GM12878 (cell line): ENCODE measurements at regions of chrX and their contacts with region 1.

Region 1: GRCh38 chrX:120463241-120463640 is 5.9 kb downstream of the LAMP2 start:
- DNase-seq: no peak
- ATAC-seq: no peak
- H3K4me3 ChIP-seq: no peak overlapping the region
- H3K27ac ChIP-seq: no peak overlapping the region
- H3K4me1 ChIP-seq: no peaks in the 10 kb centered on the region
- H3K27me3 ChIP-seq: no peaks in the 10 kb centered on the region
- CTCF ChIP-seq: no peak
- EP300 ChIP-seq: no peak
- POLR2A ChIP-seq: no peak
- RAD21 ChIP-seq: no peak

Region 2: DNA sequence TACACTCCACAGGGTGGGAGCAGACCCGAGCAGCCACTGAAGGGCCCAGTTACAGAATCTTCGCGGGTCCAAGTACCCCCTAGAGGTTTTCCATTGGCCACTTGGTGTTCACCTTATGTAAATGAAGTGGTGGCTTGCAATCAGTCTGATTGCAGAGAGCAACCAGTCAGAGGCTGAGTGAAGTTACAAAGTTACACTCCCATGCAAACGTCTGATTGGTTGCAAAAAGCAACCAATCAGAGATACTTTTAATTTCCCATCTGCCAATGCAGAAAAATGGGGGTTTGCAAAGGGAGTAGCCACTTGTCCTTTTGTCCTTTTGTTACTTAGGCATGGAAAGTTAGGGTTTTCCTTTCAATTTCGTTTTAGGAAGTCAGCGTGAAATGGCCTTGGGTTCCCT is 492.7 kb before region 1 on chrX:
- CTCF ChIA-PET with region 1: no interaction called
- POLR2A ChIA-PET with region 1: no interaction called
- RAD21 ChIA-PET with region 1: no interaction called
- SMC1A ChIA-PET with region 1: no interaction called
- in situ Hi-C with region 1: no loop called
- intact Hi-C with region 1: no loop called
- DNase-seq: no peak
- ATAC-seq: no peak
- H3K4me3 ChIP-seq: no peak overlapping the region
- H3K27ac ChIP-seq: no peak overlapping the region
- H3K4me1 ChIP-seq: no peaks in the 10 kb centered on the region
- H3K27me3 ChIP-seq: no peaks in the 10 kb centered on the region
- CTCF ChIP-seq: no peak
- EP300 ChIP-seq: no peak
- POLR2A ChIP-seq: no peak
- RAD21 ChIP-seq: no peak

Region 3: GRCh38 chrX:120452131-120452530 is 11.1 kb before region 1 on chrX:
- CTCF ChIA-PET with region 1: interaction called, 16 read pairs
- POLR2A ChIA-PET with region 1: interaction called, 7 read pairs
- RAD21 ChIA-PET with region 1: interaction called, 4 read pairs
- SMC1A ChIA-PET with region 1: interaction called, 16 read pairs
- in situ Hi-C with region 1: no loop called
- intact Hi-C with region 1: no loop called
- DNase-seq: no peak
- ATAC-seq: 0 out of 3 replicates have a peak, but pooled peaks have one; percentile 22
- H3K4me3 ChIP-seq: no peak overlapping the region
- H3K27ac ChIP-seq: no peak overlapping the region
- H3K4me1 ChIP-seq: peaks cover 3% of the 10 kb centered on the region
- H3K27me3 ChIP-seq: no peaks in the 10 kb centered on the region
- CTCF ChIP-seq: 0 out of 6 replicates have a peak, but pooled peaks of 2 of the 3 experiments have one; percentile 8 to 19
- EP300 ChIP-seq: no peak
- POLR2A ChIP-seq: no peak
- RAD21 ChIP-seq: peak; percentile 43

Region 4: DNA sequence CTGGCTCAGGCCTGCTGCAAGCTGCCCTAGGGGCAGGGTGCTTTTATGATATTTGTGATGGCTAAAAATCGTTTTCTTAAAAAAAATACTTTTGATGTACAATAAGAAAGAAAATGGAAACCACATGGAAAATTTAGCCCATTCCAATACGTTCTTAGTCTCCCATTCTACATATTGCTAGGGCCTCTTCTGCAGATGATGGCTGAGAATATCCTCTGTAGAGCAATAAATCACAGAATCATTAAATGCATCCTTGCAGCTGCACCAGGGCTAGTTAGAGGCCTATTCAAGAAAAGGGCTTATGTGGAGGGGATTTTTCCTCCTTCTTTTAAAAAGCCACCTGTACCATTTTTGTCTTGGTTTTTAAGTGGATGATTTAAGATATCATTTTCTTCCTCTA is 264.2 kb after region 1 on chrX:
- CTCF ChIA-PET with region 1: no interaction called
- POLR2A ChIA-PET with region 1: no interaction called
- RAD21 ChIA-PET with region 1: no interaction called
- SMC1A ChIA-PET with region 1: no interaction called
- in situ Hi-C with region 1: no loop called
- intact Hi-C with region 1: no loop called
- DNase-seq: no peak
- ATAC-seq: no peak
- H3K4me3 ChIP-seq: no peak overlapping the region
- H3K27ac ChIP-seq: no peak overlapping the region
- H3K4me1 ChIP-seq: no peaks in the 10 kb centered on the region; the same call in 1 of the 2 replicates
- H3K27me3 ChIP-seq: no peaks in the 10 kb centered on the region
- CTCF ChIP-seq: no peak
- EP300 ChIP-seq: no peak
- POLR2A ChIP-seq: no peak
- RAD21 ChIP-seq: no peak

Region 5: DNA sequence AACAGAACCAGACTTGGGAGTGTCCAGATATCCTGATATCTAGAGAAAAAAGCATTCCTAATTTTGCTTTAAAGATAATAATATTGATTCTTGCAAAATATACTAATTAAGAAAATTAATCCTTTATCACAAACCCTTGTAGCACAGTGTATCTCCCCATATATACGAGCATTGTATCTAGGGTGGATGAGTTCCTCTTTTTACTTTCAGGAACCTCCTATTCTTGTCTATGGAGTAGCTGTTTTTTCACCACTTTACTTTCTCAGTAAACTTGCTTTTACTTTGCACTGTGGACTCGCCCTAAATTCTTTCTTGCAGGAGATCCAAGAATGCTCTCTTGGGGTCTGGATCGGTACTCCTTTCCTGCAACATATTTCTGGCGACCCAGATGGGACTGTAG is 688.1 kb after region 1 on chrX:
- CTCF ChIA-PET with region 1: no interaction called
- POLR2A ChIA-PET with region 1: no interaction called
- RAD21 ChIA-PET with region 1: no interaction called
- SMC1A ChIA-PET with region 1: no interaction called
- in situ Hi-C with region 1: no loop called
- intact Hi-C with region 1: no loop called
- DNase-seq: no peak
- ATAC-seq: peak; percentile 90
- H3K4me3 ChIP-seq: no peak overlapping the region
- H3K27ac ChIP-seq: no peak overlapping the region
- H3K4me1 ChIP-seq: no peaks in the 10 kb centered on the region
- H3K27me3 ChIP-seq: no peaks in the 10 kb centered on the region
- CTCF ChIP-seq: no peak
- EP300 ChIP-seq: no peak
- POLR2A ChIP-seq: no peak
- RAD21 ChIP-seq: no peak